ENCODE measurements at regions of chr22 and their contacts with region 1.

Region 1: DNA sequence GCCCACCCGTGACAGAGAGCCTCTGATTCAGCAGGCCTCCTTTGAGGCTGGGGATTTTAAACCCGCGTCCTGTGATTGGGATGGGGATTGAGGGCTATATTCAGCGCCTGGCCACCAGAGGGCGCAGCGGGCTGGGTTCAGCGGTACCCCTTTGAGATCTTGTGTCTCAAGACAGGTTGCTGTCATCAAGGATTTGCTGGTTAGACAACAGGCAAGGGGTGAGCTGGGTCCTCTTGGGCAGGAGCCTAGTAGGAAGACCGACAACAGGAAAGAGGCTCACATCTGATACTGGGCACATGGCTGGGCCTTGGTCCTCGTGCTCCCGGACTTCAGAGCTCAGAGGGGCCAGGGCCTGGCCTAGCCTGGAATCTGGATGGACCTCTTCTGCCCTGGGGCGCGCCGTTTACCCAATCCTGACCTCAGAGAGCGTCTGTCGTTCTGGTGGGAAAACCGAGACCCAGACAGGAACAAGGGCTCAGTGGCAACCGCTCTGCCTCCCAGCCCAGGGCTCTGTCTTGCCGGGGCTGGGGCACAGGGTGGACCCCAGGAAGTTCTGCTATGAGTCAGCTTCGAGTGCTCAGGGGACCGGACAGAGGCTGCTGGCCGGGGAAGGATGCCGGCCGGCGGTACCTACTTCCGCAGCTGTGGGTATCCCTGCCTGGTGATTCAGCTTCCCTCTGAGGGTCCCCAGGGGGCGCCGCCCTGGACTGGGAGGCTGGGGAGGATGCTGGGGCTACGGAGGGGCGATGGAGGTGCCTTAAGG is 929 bp upstream of the SLC35E4 start:
- DNase-seq: peak; percentile 83
- ATAC-seq: peak; percentile 57
- H3K4me3 Mint-ChIP-seq: peak overlapping the region; percentile 83
- H3K27ac Mint-ChIP-seq: peak overlapping the region; percentile 88
- H3K4me1 Mint-ChIP-seq: peaks cover 20% of the 10 kb centered on the region
- H3K27me3 Mint-ChIP-seq: no peaks in the 10 kb centered on the region
- CTCF ChIP-seq: no peak

Region 2: GRCh38 chr22:30606455-30607299 is 28.0 kb before region 1 on chr22 and contains the start of gene TCN2:
- CTCF ChIA-PET with region 1: interaction called, 11 read pairs
- POLR2A ChIA-PET with region 1: no interaction called
- intact Hi-C with region 1: no loop called
- DNase-seq: peak; percentile 22
- ATAC-seq: peak; percentile 59
- H3K4me3 Mint-ChIP-seq: peak within 1 kb of the TSS; percentile 83
- H3K27ac Mint-ChIP-seq: peak within 1 kb of the TSS; percentile 20
- H3K4me1 Mint-ChIP-seq: peaks cover 35% of the 10 kb centered on the region
- H3K27me3 Mint-ChIP-seq: peaks cover 5% of the 10 kb centered on the region
- CTCF ChIP-seq: no peak
- total RNA-seq, gene TCN2: not detected in 2 replicates

Region 3: GRCh38 chr22:30694171-30694639 is 59.6 kb after region 1 on chr22:
- CTCF ChIA-PET with region 1: no interaction called
- POLR2A ChIA-PET with region 1: no interaction called
- intact Hi-C with region 1: loop called (anchors 1 kb)
- DNase-seq: peak; percentile 46
- ATAC-seq: peak; percentile 65
- H3K4me3 Mint-ChIP-seq: peak overlapping the region; percentile 85
- H3K27ac Mint-ChIP-seq: no peak overlapping the region
- H3K4me1 Mint-ChIP-seq: peaks cover 7% of the 10 kb centered on the region
- H3K27me3 Mint-ChIP-seq: peaks cover 34% of the 10 kb centered on the region
- CTCF ChIP-seq: no peak

Region 4: DNA sequence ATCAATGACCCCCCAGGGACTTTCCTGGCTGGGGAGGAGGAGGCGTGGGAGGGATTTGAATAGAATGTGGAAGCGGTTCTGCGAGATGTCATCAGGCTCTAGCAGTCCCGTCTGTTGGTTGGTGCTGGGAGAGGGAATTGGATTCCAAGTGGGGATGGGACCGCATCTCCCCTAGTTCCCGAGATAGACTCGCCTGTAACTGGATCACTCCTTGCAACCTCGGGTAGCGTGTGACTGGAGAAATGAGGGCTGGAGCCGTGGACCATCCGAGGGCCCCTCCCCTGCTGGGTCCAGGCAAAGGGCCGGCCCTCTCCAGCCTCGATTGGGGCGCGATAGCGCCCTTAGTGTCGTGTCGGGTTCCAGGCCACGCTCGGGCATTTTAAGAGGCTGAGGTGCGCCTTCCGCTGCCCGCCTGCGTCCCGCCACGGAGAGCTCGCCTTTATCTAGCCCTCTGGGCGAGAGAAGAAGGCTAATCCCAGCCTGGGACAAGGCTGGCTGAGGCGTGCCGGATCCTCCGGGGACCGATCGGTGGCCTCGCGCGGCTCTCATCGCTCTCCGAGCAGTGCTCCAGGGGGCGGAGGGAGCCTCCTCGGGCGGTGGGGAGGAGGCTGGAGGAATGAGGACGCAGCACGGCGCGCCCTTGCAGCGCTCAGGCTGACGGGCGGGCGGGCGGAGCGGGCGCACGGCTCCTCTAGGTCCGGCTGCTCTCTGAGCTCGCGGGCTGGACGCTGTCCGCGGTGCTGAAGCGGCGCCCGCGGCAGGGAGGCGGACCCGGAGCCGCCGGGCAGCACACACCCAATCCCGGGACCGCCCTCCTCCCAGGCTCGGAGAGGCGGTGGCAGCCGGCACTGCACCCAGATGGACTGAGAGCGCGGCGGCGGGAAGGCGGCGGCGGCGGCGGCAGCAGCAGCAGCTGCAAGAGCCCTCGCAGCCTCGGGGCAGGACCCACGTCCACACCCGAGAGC is 167.8 kb after region 1 on chr22:
- CTCF ChIA-PET with region 1: no interaction called
- POLR2A ChIA-PET with region 1: no interaction called
- intact Hi-C with region 1: no loop called
- DNase-seq: peak; percentile 32
- ATAC-seq: peak; percentile 74
- H3K4me3 Mint-ChIP-seq: no peak overlapping the region
- H3K27ac Mint-ChIP-seq: no peak overlapping the region
- H3K4me1 Mint-ChIP-seq: no peaks in the 10 kb centered on the region
- H3K27me3 Mint-ChIP-seq: peaks cover 50% of the 10 kb centered on the region
- CTCF ChIP-seq: no peak

Region 5: GRCh38 chr22:30920407-30920806 is 285.8 kb after region 1 on chr22:
- CTCF ChIA-PET with region 1: interaction called, 51 read pairs
- POLR2A ChIA-PET with region 1: interaction called, 12 read pairs
- intact Hi-C with region 1: no loop called
- DNase-seq: peak; percentile 72
- ATAC-seq: peak; percentile 71
- H3K4me3 Mint-ChIP-seq: peak overlapping the region; percentile 58
- H3K27ac Mint-ChIP-seq: no peak overlapping the region
- H3K4me1 Mint-ChIP-seq: peaks cover 10% of the 10 kb centered on the region
- H3K27me3 Mint-ChIP-seq: no peaks in the 10 kb centered on the region
- CTCF ChIP-seq: peak; percentile 97

Region 6: DNA sequence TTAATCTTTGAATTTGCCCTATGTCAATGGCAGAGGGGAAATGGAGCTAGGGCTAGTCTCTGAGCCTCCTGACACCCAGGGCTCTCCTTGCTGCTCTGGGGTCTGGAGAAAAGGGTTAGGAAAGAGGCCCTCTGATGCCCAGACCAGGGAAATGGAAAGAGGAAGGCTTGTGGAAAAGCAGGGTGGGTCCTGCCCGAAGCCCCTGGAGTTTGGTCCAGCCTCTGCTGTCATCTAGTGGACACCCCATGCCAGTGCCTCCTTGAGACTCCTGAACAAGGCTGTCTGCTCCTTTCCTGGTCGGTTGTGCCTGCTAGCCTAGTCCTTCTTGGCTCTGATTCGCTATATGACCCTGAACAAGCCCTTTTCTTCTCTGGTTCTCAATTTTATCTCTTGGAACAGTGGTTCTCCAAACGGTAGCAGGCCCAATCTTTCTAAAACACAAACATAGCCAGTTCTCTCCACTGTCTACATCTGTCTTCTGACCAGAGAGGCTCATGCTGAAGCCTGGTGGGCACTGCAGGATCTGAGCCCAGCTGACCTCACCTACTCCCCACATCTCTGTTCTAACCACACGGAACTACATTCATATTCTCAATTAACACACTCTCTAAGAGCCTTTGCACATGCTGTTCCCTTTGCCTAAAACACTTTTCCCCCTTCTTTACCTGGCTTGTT is 514.4 kb after region 1 on chr22:
- CTCF ChIA-PET with region 1: no interaction called
- POLR2A ChIA-PET with region 1: no interaction called
- intact Hi-C with region 1: loop called (anchors 1 kb)
- DNase-seq: no peak
- ATAC-seq: peak; percentile 77
- H3K4me3 Mint-ChIP-seq: no peak overlapping the region
- H3K27ac Mint-ChIP-seq: no peak overlapping the region
- H3K4me1 Mint-ChIP-seq: peaks cover 1% of the 10 kb centered on the region
- H3K27me3 Mint-ChIP-seq: peaks cover 2% of the 10 kb centered on the region
- CTCF ChIP-seq: no peak

Measured in activated B cell treated with CpG ODN at 0.5 μM for 24 hours (primary cell).